ENCODE measurements at regions of chr14 and their contacts with region 1.

Region 1: DNA sequence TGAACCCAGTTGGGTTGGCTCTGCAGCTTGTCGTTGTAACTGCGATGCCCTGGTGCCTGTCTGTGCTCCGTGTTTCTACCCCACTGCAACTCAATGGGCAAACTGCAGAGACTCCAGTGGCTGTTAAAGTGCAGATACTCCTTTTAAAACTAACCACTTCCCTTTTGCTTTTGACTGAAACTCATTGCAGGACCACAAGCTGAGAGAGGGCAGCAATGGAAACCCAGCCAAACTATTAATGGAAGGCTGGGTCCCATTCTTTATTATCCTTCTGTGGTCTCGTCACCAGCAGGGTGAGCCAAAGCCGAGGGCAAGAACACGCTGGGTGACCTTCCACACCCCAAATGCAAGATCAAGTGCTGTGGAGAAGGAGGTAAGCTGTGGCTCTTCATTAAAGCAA is 910.4 kb downstream of the VRK1 start:
- DNase-seq: peak in 1 of 2 donors; percentile 59
- ATAC-seq: peak; percentile 6 to 21 (median 19)
- H3K4me3 ChIP-seq: no peak overlapping the region
- H3K4me3 Mint-ChIP-seq: peak overlapping the region; percentile 92
- H3K27ac ChIP-seq: peak overlapping the region; percentile 79
- H3K27ac Mint-ChIP-seq: peak overlapping the region; percentile 87 to 88
- H3K4me1 ChIP-seq: peaks cover 62% of the 10 kb centered on the region
- H3K4me1 Mint-ChIP-seq: peaks cover 89 to 98% of the 10 kb centered on the region in 2 donors
- H3K27me3 ChIP-seq: no peaks in the 10 kb centered on the region
- H3K27me3 Mint-ChIP-seq: no peaks in the 10 kb centered on the region
- CTCF ChIP-seq: no peak

Region 2: DNA sequence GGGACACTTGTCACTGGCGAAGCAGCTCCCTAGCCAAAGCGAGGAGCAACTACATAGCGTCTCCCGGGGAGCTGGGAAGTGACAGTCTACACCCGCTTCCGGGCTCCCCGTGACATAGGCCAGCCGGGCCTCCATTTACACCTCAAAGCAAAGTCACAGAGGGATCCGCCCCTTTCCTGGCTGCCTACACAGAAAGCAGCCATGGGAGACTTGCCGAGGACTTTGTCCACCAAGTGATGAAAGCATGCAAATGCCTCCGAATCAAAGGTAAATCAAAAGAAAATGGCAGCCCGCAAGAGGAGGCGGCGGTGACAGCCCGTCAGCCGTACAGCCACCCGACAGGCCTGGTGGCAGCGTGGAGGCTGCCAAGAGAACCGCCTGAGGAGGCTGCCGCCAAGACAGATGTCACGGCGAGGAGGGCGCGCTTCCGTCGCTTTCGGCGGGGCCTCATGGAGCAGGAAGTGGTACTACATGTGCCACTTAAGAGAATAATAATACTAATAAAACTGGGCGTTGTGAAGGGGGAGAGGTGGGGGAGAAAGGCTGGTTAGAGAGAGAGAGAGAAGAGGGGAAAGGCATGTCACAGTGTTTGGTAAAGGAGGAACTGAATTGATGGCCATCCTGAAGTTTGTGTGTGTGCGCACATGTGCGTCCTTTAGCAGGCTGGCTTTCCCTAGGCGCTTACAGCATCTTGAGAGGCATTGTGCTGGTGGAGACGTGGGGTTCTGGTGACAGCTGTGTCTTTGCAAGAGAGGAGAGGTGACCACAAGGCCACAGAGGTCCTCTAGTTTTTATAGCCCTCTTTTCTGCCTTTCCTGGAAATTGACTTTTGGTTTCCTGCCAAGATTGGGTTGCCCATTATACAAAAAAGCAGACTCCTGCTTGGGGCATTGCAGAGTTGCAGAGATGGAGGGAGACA is 248.7 kb before region 1 on chr14:
- intact Hi-C with region 1: loop called (anchors 2 kb)
- DNase-seq: peak; percentile 58 to 90
- ATAC-seq: peak; percentile 61 to 77 (median 75)
- H3K4me3 ChIP-seq: peak overlapping the region; percentile 33
- H3K4me3 Mint-ChIP-seq: peak overlapping the region; percentile 93
- H3K27ac ChIP-seq: peak overlapping the region; percentile 94
- H3K27ac Mint-ChIP-seq: peak overlapping the region; percentile 97 to 99
- H3K4me1 ChIP-seq: peaks cover 60% of the 10 kb centered on the region
- H3K4me1 Mint-ChIP-seq: peaks cover 80 to 82% of the 10 kb centered on the region in 2 donors
- H3K27me3 ChIP-seq: no peaks in the 10 kb centered on the region
- H3K27me3 Mint-ChIP-seq: no peaks in the 10 kb centered on the region
- CTCF ChIP-seq: no peak

Region 3: GRCh38 chr14:97634751-97635150 is 72.9 kb before region 1 on chr14:
- intact Hi-C with region 1: loop called (anchors 5 kb)
- DNase-seq: peak in 1 of 2 donors; percentile 68
- ATAC-seq: peak in 2 of 3 donors; percentile 26 to 65
- H3K4me3 ChIP-seq: peak overlapping the region; percentile 19
- H3K4me3 Mint-ChIP-seq: peak overlapping the region; percentile 89
- H3K27ac ChIP-seq: no peak overlapping the region
- H3K27ac Mint-ChIP-seq: peak overlapping the region; percentile 61 to 91
- H3K4me1 ChIP-seq: no peaks in the 10 kb centered on the region
- H3K4me1 Mint-ChIP-seq: peaks cover 29 to 52% of the 10 kb centered on the region in 2 donors
- H3K27me3 ChIP-seq: no peaks in the 10 kb centered on the region
- H3K27me3 Mint-ChIP-seq: peaks cover 5 to 9% of the 10 kb centered on the region in 2 donors
- CTCF ChIP-seq: no peak

Region 4: GRCh38 chr14:97771340-97772045 is 63.9 kb after region 1 on chr14:
- intact Hi-C with region 1: no loop called
- DNase-seq: no peak
- ATAC-seq: no peak
- H3K4me3 ChIP-seq: no peak overlapping the region
- H3K4me3 Mint-ChIP-seq: no peak overlapping the region
- H3K27ac ChIP-seq: no peak overlapping the region
- H3K27ac Mint-ChIP-seq: no peak overlapping the region
- H3K4me1 ChIP-seq: no peaks in the 10 kb centered on the region
- H3K4me1 Mint-ChIP-seq: no peaks in the 10 kb centered on the region
- H3K27me3 ChIP-seq: no peaks in the 10 kb centered on the region
- H3K27me3 Mint-ChIP-seq: no peaks in the 10 kb centered on the region
- CTCF ChIP-seq: no peak

Region 5: GRCh38 chr14:99055816-99056215 is 1348.2 kb after region 1 on chr14:
- intact Hi-C with region 1: loop called (anchors 5 kb)
- DNase-seq: peak; percentile 59 to 77
- ATAC-seq: peak; percentile 89 to 96 (median 92)
- H3K4me3 ChIP-seq: no peak overlapping the region
- H3K4me3 Mint-ChIP-seq: peak overlapping the region; percentile 81
- H3K27ac ChIP-seq: peak overlapping the region; percentile 18
- H3K27ac Mint-ChIP-seq: peak overlapping the region; percentile 78 to 87
- H3K4me1 ChIP-seq: peaks cover 12% of the 10 kb centered on the region
- H3K4me1 Mint-ChIP-seq: peaks cover 31 to 33% of the 10 kb centered on the region in 2 donors
- H3K27me3 ChIP-seq: no peaks in the 10 kb centered on the region
- H3K27me3 Mint-ChIP-seq: peaks cover 0 to 2% of the 10 kb centered on the region in 2 donors
- CTCF ChIP-seq: no peak

Measured in natural killer cell (primary cell).